Right ventricle myocardium inferior (tissue), 1 donor: ENCODE measurements at regions of chr1 and their contacts with region 1.

Region 1: DNA sequence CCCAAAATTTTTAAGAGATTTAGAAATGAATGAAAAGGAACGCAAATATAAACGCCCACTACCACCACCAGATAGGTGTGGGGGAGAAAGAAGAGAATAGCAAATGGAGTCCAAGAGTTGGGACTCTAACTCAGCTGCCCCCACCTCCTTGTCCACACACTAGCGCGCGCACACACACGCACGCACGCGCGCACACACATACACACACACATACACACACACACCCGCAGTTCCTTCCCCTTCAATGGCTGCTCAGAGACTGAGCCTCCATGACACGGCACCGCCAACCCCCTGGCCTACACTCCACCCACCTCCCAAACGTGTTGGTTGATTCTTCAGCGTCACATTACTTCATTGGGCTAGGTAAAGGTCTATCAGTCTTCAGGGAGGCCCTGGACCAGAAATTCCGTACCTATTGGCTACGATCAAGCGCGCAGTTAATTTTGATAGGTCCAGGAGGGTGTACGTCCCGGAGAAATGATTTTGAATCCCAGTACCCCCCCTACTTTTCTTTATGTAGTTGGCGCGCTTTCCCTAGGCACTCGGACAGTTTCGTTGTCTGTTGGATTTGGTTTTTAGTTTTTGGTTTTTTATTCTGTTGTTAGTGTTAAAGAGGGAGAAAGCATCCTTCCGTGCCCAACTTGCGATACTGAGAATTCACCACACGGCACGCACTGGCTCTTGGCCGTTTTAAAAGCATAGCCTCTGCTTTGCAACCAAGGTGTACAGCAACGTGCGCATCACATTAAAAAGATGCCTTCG is at the start of gene ANP32E:
- DNase-seq: peak; percentile 95
- ATAC-seq: peak; percentile 98
- total RNA-seq, gene ANP32E: 28.6 TPM

Region 2: DNA sequence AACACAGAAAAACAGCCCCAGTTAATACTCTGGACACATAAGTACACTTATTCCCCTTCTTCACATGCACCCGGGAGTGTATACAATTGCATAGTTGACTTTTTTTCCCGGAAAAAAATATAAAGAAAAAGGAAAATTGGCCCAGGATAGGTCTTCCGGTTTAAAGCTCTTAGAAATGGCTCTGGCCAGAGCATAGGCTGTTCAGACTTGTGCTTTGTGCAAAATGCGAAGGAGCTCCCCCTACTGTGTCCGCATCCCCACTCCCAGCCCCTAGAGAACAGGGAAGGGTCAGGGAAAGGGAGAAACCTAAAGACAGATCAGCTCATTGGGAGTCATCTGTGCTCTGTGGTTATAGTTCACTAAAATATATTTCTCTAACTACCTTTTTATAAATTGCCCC is 293.8 kb before region 1 on chr1:
- intact Hi-C with region 1: no loop called
- DNase-seq: no peak
- ATAC-seq: peak; percentile 45

Region 3: GRCh38 chr1:150213170-150214098 is 22.6 kb before region 1 on chr1:
- intact Hi-C with region 1: loop called (anchors 2 kb)
- DNase-seq: peak; percentile 98
- ATAC-seq: peak; percentile 100

Region 4: DNA sequence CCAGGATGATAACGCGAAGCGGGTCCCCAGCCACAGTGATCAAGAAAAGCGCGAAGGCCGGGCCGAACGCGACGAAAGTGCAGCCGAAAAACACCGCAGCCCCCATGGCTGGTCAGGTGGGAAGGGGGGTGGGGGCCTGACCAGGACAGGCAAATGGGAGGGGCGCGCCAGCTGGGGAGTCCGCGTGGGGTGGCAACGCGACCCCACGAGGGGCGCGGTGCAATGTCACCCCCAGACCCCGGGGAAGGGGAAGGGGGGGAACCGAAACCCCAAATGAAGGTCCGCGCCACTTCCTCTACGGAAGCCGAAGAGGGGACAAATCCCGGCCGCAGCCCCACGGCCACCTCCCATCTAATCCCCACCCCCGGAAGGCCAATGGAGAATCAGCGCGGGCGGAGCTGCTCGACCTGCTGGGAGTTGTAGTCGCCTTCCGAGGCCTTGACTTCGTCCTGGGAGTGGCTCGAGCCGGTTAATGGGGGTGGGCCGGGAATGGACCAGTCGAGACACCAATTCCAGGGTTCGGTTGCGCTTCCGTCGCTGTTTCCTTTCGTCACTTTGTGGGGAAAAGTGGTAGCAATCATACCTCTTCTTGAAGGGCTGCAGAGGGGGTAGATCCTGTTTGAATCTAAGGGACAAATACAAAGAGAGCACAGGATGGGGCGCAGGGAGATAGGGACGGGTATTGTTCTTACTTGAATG is 32.8 kb after region 1 on chr1 and contains the start of gene APH1A:
- intact Hi-C with region 1: no loop called
- DNase-seq: peak; percentile 98
- ATAC-seq: peak; percentile 98
- total RNA-seq, gene APH1A: 58.7 TPM

Region 5: GRCh38 chr1:150281837-150282653 is 46.0 kb after region 1 on chr1 and contains the start of gene CIART:
- intact Hi-C with region 1: loop called (anchors 5 kb)
- DNase-seq: peak; percentile 96
- ATAC-seq: peak; percentile 97
- total RNA-seq, gene CIART: 12.8 TPM